ENCODE measurements at regions of chr14 and their contacts with region 1.

Region 1: GRCh38 chr14:105045710-105046326 is 19.4 kb downstream of the GPR132 start:
- DNase-seq: peak; percentile 85 to 94 (median 93)
- H3K4me3 ChIP-seq: no peak overlapping the region
- H3K4me3 Mint-ChIP-seq: peak overlapping the region in 3 of 7 donors; percentile 3 to 23 (median 23)
- H3K27ac ChIP-seq: no peak overlapping the region
- H3K27ac Mint-ChIP-seq: peak overlapping the region; percentile 19 to 87 (median 70)
- H3K4me1 ChIP-seq: peaks cover 6% of the 10 kb centered on the region
- H3K4me1 Mint-ChIP-seq: peaks cover 9 to 17% (median 14%) of the 10 kb centered on the region in 3 donors
- H3K27me3 ChIP-seq: peaks cover 4% of the 10 kb centered on the region
- H3K27me3 Mint-ChIP-seq: peaks cover 3 to 4% of the 10 kb centered on the region in 2 donors

Region 2: GRCh38 chr14:104976198-104977007 is 69.4 kb before region 1 on chr14:
- CTCF ChIA-PET with region 1: interaction called, 122 read pairs
- POLR2A ChIA-PET with region 1: interaction called, 7 read pairs
- DNase-seq: peak; percentile 75 to 88 (median 84)
- H3K4me3 ChIP-seq: no peak overlapping the region
- H3K4me3 Mint-ChIP-seq: peak overlapping the region in 6 of 7 donors; percentile 32 to 82 (median 68)
- H3K27ac ChIP-seq: no peak overlapping the region
- H3K27ac Mint-ChIP-seq: peak overlapping the region in 3 of 8 donors; percentile 37 to 87 (median 43)
- H3K4me1 ChIP-seq: peaks cover 7% of the 10 kb centered on the region
- H3K4me1 Mint-ChIP-seq: peaks cover 5 to 27% (median 11%) of the 10 kb centered on the region in 3 donors
- H3K27me3 ChIP-seq: peaks cover 16% of the 10 kb centered on the region
- H3K27me3 Mint-ChIP-seq: peaks cover 22 to 38% of the 10 kb centered on the region in 2 donors

Region 3: GRCh38 chr14:104998801-104999200 is 47.0 kb before region 1 on chr14:
- CTCF ChIA-PET with region 1: interaction called, 13 read pairs
- POLR2A ChIA-PET with region 1: no interaction called
- DNase-seq: no peak
- H3K4me3 ChIP-seq: no peak overlapping the region
- H3K4me3 Mint-ChIP-seq: no peak overlapping the region
- H3K27ac ChIP-seq: no peak overlapping the region
- H3K27ac Mint-ChIP-seq: peak overlapping the region in 3 of 8 donors; percentile 38 to 50 (median 42)
- H3K4me1 ChIP-seq: no peaks in the 10 kb centered on the region
- H3K4me1 Mint-ChIP-seq: no peaks in the 10 kb centered on the region
- H3K27me3 ChIP-seq: no peaks in the 10 kb centered on the region
- H3K27me3 Mint-ChIP-seq: no peaks in the 10 kb centered on the region

Region 4: GRCh38 chr14:105020815-105021655 is 24.8 kb before region 1 on chr14 and contains the start of gene CDCA4:
- CTCF ChIA-PET with region 1: interaction called, 47 read pairs
- POLR2A ChIA-PET with region 1: interaction called, 5 read pairs
- DNase-seq: peak; percentile 96 to 98 (median 97)
- H3K4me3 ChIP-seq: peak within 1 kb of the TSS; percentile 69
- H3K4me3 Mint-ChIP-seq: peak within 1 kb of the TSS; percentile 86 to 96 (median 93)
- H3K27ac ChIP-seq: peak within 1 kb of the TSS; percentile 86
- H3K27ac Mint-ChIP-seq: peak within 1 kb of the TSS; percentile 90 to 99 (median 96)
- H3K4me1 ChIP-seq: peaks cover 49% of the 10 kb centered on the region
- H3K4me1 Mint-ChIP-seq: peaks cover 57 to 78% (median 68%) of the 10 kb centered on the region in 3 donors
- H3K27me3 ChIP-seq: no peaks in the 10 kb centered on the region
- H3K27me3 Mint-ChIP-seq: peaks cover 0 to 3% of the 10 kb centered on the region in 2 donors
- total RNA-seq, gene CDCA4: 73.0 to 76.7 TPM

Region 5: GRCh38 chr14:105065280-105066228 is 19.7 kb after region 1 on chr14 and contains the start of gene GPR132:
- CTCF ChIA-PET with region 1: interaction called, 106 read pairs
- POLR2A ChIA-PET with region 1: interaction called, 7 read pairs
- DNase-seq: peak; percentile 82 to 97 (median 96)
- H3K4me3 ChIP-seq: peak within 1 kb of the TSS; percentile 99
- H3K4me3 Mint-ChIP-seq: peak within 1 kb of the TSS; percentile 88 to 100 (median 94)
- H3K27ac ChIP-seq: peak within 1 kb of the TSS; percentile 89
- H3K27ac Mint-ChIP-seq: peak within 1 kb of the TSS; percentile 94 to 100 (median 98)
- H3K4me1 ChIP-seq: peaks cover 86% of the 10 kb centered on the region
- H3K4me1 Mint-ChIP-seq: peaks cover 63 to 91% (median 69%) of the 10 kb centered on the region in 3 donors
- H3K27me3 ChIP-seq: no peaks in the 10 kb centered on the region
- H3K27me3 Mint-ChIP-seq: peaks cover 0 to 2% of the 10 kb centered on the region in 2 donors
- total RNA-seq, gene GPR132: 51.3 to 52.0 TPM

Measured in CD8-positive, alpha-beta memory T cell (primary cell).